ENCODE measurements at regions of chr15 and their contacts with region 1.

Region 1: GRCh38 chr15:22930782-22931484 is 49.2 kb downstream of the CYFIP1 start:
- DNase-seq: no peak

Region 2: GRCh38 chr15:22968366-22968765 is 37.4 kb after region 1 on chr15:
- intact Hi-C with region 1: loop called (anchors 5 kb)
- DNase-seq: peak; percentile 9

Region 3: DNA sequence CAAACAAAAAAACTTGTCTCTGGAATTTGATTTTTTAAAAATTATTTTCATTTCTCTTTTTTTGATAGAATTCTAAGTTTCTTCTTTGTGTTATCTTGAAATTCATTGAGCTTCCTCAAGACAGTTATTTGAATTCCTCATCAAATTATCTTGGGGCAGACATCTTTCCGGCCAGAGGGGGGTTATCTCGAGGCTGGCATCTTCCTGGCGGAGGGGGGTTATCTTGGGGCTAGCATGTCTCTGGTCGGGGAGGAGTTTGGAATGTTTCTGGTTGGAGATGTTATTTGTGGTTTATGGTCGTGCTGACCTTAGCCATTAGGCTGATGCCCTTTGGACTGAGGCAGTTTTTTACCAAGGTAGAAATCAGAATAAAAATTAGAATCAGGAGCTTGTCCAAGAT is 124.4 kb after region 1 on chr15:
- intact Hi-C with region 1: no loop called
- DNase-seq: no peak

Region 4: GRCh38 chr15:23073890-23074646 is 143.1 kb after region 1 on chr15:
- intact Hi-C with region 1: no loop called
- DNase-seq: no peak